Ovary (tissue), 10 donors: ENCODE measurements at regions of chr4 and their contacts with region 1.

Region 1: GRCh38 chr4:82268050-82268825 is 105.6 kb downstream of the HNRNPD start:
- DNase-seq: peak; percentile 38 to 63 (median 45)
- H3K4me3 ChIP-seq: no peak overlapping the region
- H3K27ac ChIP-seq: no peak overlapping the region
- H3K4me1 ChIP-seq: no peaks in the 10 kb centered on the region
- H3K27me3 ChIP-seq: no peaks in the 10 kb centered on the region
- CTCF ChIP-seq: peak; percentile 44 to 58 (median 51)
- EP300 ChIP-seq: no peak
- POLR2A ChIP-seq: no peak

Region 2: DNA sequence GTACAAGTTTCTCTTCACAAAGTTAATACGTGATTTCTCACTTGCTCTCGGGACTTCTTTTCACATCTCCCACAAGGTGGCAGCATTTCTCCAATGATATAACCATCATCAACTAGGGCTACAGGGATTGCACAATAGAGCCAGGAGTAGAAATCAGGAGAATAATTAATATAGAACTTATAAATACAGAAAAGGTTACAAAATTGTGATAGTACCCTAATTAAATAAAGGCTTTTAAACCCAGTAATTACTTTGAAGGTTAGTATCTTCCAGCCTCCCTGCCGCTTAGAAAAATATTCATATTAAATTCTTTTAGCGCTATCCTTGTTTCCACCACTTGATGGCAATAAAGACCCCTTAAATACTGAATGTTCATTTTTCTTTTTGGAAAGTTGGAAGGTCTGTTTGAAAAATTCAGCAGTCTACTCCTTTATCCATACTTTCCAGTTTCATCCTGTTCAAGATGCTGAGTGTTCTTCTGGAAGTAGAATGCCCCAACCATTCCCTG is 862.3 kb before region 1 on chr4:
- intact Hi-C with region 1: loop called in 1 of 4 experiments (anchors 10 kb)
- DNase-seq: peak in 1 of 5 donors; percentile 41
- H3K4me3 ChIP-seq: no peak overlapping the region
- H3K27ac ChIP-seq: no peak overlapping the region
- H3K4me1 ChIP-seq: no peaks in the 10 kb centered on the region
- H3K27me3 ChIP-seq: no peaks in the 10 kb centered on the region
- CTCF ChIP-seq: peak; percentile 62 to 90 (median 80)
- EP300 ChIP-seq: no peak
- POLR2A ChIP-seq: no peak

Region 3: DNA sequence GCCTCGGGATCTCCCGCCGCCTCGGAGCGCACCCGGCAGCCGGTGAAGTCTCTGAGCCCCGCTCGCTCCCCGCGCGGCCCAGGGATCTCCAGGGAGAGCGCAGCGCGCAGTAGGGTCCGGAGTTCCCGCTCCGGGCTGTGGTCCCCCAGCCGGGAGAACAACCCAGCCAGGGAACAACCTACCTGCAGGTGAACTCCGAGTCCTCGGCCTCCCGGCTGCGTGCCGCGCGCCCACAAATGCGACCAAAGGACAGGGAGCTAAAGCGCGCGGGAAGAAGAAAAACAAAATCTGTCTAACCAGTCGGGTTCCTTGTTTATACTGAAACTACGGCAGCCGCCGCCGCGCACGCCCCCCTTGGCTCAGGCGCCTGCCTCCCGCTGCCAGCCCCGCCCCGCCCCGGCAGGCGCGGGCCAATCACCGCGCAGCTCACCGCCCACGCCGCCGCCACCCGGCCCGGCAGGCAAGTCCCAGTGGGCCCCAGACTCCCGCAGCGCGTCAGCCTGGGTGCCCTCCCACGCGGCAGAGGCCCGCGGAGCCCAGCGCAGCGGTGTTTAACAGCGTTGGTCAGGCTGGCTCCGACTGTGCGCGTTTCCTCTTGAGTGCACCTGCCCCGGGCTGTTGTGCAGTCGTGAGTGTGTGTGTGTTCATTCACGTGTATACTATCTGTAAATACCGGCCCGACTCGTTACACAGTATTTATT is 796.5 kb before region 1 on chr4 and contains the start of gene RASGEF1B:
- intact Hi-C with region 1: loop called in 1 of 4 experiments (anchors 10 kb)
- DNase-seq: peak; percentile 71 to 87 (median 86)
- H3K4me3 ChIP-seq: peak within 1 kb of the TSS; percentile 55
- H3K27ac ChIP-seq: peak within 1 kb of the TSS; percentile 53 to 69
- H3K4me1 ChIP-seq: no peaks in the 10 kb centered on the region
- H3K27me3 ChIP-seq: no peaks in the 10 kb centered on the region
- CTCF ChIP-seq: no peak
- EP300 ChIP-seq: no peak
- POLR2A ChIP-seq: peak; percentile 56
- total RNA-seq, gene RASGEF1B: 1.1 to 14.4 (median 4.3) TPM

Region 4: DNA sequence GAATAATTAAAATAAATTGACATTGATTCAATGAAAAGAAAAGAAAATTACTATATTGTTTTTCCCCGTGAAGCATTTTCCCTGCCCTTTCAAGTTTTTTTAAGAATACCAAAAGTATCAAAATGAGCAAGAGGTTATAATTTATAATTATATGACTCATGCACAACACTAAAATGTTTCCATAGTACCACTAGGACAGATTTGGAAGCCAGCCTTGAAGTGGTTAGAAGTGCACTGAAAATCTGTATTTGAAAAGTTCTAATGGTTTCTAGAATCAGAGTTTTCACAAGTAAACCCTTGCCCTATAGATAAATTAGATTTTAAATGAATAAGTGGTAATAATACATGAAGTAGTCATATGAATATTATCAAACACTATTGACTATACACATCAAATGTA is 35.3 kb before region 1 on chr4:
- intact Hi-C with region 1: no loop called
- DNase-seq: no peak
- H3K4me3 ChIP-seq: no peak overlapping the region
- H3K27ac ChIP-seq: no peak overlapping the region
- H3K4me1 ChIP-seq: no peaks in the 10 kb centered on the region
- H3K27me3 ChIP-seq: no peaks in the 10 kb centered on the region
- CTCF ChIP-seq: no peak
- EP300 ChIP-seq: no peak
- POLR2A ChIP-seq: no peak

Region 5: GRCh38 chr4:82481506-82481840 is 213.2 kb after region 1 on chr4:
- intact Hi-C with region 1: no loop called
- DNase-seq: no peak
- H3K4me3 ChIP-seq: no peak overlapping the region
- H3K27ac ChIP-seq: no peak overlapping the region
- H3K4me1 ChIP-seq: no peaks in the 10 kb centered on the region
- H3K27me3 ChIP-seq: no peaks in the 10 kb centered on the region
- CTCF ChIP-seq: no peak
- EP300 ChIP-seq: no peak
- POLR2A ChIP-seq: no peak

Region 6: GRCh38 chr4:82614843-82615449 is 346.7 kb after region 1 on chr4:
- intact Hi-C with region 1: no loop called
- DNase-seq: no peak
- H3K4me3 ChIP-seq: no peak overlapping the region
- H3K27ac ChIP-seq: no peak overlapping the region
- H3K4me1 ChIP-seq: no peaks in the 10 kb centered on the region
- H3K27me3 ChIP-seq: no peaks in the 10 kb centered on the region
- CTCF ChIP-seq: no peak
- EP300 ChIP-seq: no peak
- POLR2A ChIP-seq: no peak

Region 7: DNA sequence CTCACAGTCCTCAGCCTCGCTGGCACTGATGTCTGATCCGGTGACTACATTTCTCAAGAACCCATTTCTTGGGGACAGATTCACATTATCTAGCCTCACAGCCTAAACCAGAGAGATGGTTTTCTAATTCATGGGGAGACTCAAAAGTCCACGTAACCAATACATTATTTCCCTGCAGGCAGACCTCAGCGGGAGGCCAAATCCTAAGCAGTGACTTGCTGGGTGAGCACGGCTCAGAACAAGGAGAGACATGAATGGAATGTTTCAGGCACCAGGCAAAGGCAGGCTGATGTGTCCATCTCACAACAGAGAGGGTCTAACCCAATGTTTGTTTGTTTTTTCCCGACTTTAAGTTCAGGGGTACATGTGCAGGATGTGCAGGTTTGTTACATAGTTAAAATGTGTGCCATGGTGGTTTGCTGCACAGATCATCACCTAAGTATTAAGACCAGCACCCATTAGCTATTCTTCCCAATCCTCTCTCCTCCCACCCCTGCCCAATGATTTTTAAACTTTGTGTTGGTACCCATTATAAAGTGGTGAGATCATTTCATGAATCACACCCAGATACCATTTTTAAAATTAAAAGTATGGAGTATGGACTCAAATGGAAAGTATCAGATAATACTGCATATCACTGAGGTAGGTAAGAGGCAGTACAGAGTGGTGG is 477.1 kb after region 1 on chr4:
- intact Hi-C with region 1: no loop called
- DNase-seq: no peak
- H3K4me3 ChIP-seq: no peak overlapping the region
- H3K27ac ChIP-seq: no peak overlapping the region
- H3K4me1 ChIP-seq: peaks cover 14% of the 10 kb centered on the region
- H3K27me3 ChIP-seq: no peaks in the 10 kb centered on the region
- CTCF ChIP-seq: no peak
- EP300 ChIP-seq: no peak
- POLR2A ChIP-seq: no peak